OCI-LY7 (cell line): ENCODE measurements at regions of chr7 and their contacts with region 1.

Region 1: DNA sequence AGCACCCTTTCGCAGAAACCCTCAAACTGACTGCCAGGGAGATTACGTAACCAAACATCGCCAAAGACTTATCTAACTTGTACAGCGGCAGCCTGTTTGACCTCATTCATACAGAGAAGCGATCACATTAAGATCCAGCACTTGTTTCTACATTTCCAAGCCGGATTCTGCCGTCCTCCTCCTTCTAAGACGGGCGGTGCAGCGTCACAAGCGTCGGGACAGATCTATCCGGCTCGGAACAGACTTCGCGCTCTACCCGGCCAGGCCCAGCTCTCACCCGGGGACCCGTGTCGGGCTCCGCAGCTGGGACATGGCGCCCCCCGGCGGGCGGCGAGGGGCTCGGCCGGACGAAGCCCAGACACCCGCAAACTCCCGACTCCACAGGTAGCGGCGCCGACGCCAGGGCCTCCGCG is 373 bp downstream of the H2AZ2 start:
- DNase-seq: peak; percentile 90
- H3K4me3 ChIP-seq: peak overlapping the region; percentile 88
- H3K27ac ChIP-seq: peak overlapping the region; percentile 86
- H3K4me1 ChIP-seq: peaks cover 33% of the 10 kb centered on the region
- CTCF ChIP-seq: peak; percentile 85

Region 2: GRCh38 chr7:44587843-44588711 is 259.4 kb before region 1 on chr7:
- CTCF ChIA-PET with region 1: interaction called, 4 read pairs
- POLR2A ChIA-PET with region 1: interaction called, 4 read pairs
- intact Hi-C with region 1: loop called (anchors 1 kb)
- DNase-seq: peak; percentile 73
- H3K4me3 ChIP-seq: no peak overlapping the region
- H3K27ac ChIP-seq: no peak overlapping the region
- H3K4me1 ChIP-seq: peaks cover 9% of the 10 kb centered on the region
- CTCF ChIP-seq: peak; percentile 93

Region 3: GRCh38 chr7:44654255-44654796 is 193.2 kb before region 1 on chr7:
- CTCF ChIA-PET with region 1: no interaction called
- POLR2A ChIA-PET with region 1: no interaction called
- intact Hi-C with region 1: no loop called
- DNase-seq: no peak
- H3K4me3 ChIP-seq: no peak overlapping the region
- H3K27ac ChIP-seq: no peak overlapping the region
- H3K4me1 ChIP-seq: no peaks in the 10 kb centered on the region
- CTCF ChIP-seq: no peak

Region 4: GRCh38 chr7:44748045-44748947 is 99.2 kb before region 1 on chr7 and contains the start of gene ZMIZ2:
- CTCF ChIA-PET with region 1: no interaction called
- POLR2A ChIA-PET with region 1: interaction called, 5 read pairs
- intact Hi-C with region 1: loop called (anchors 1 kb)
- DNase-seq: peak; percentile 94
- H3K4me3 ChIP-seq: peak within 1 kb of the TSS; percentile 94
- H3K27ac ChIP-seq: peak within 1 kb of the TSS; percentile 66
- H3K4me1 ChIP-seq: peaks cover 38% of the 10 kb centered on the region
- CTCF ChIP-seq: no peak
- total RNA-seq, gene ZMIZ2: 17.2 and 18.0 TPM in 2 replicates

Region 5: DNA sequence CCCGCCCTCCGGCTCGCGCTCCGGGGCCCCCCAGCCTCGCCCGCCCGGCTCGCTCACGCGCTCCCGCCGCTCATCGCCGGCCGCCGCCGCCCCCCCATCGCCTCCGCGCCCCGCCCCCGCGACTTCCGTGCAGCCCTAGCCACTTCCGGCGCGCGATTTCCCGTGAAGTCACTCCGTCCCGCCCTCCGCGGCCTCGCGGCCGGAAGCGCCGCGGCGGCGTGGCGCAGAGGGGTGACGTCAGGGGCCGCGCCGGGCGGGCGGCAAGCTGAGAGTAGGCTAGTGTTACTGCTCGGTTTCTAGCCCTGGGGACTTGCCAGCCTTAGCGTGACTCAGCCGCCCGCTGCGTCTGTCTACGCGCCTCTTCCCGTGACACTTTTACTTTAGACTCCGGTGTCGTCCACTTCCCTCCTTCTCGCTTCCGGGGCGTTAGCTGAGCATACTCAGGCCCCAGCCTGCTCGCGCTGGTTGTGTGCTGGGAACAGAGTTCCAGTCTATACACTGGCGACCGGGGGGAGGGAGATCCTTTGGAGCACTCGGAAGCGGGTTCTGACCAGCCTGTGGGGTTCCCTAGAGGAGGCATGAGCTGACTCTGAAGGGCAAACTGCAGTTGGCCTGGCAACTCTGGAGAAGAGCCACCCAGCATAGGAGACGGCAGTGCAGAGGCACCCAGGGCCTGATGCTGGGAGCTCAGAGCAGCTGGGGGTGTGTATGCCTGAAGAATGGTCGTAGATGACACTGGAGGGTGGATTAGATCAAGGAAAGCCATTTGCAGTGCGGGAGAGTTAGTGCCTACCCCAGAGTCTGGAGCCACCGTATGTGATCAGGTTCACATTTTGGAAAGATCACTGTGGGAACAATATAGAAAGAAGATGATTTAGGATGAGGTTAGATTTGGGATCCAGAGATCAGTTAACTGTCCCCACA is 38.1 kb after region 1 on chr7 and contains the start of gene PURB:
- CTCF ChIA-PET with region 1: interaction called, 3 read pairs
- POLR2A ChIA-PET with region 1: interaction called, 27 read pairs
- intact Hi-C with region 1: loop called (anchors 1 kb)
- DNase-seq: peak; percentile 96
- H3K4me3 ChIP-seq: peak within 1 kb of the TSS; percentile 77
- H3K27ac ChIP-seq: peak within 1 kb of the TSS; percentile 91
- H3K4me1 ChIP-seq: peaks cover 63% of the 10 kb centered on the region
- CTCF ChIP-seq: no peak
- total RNA-seq, gene PURB: 14.9 and 15.2 TPM in 2 replicates

Region 6: DNA sequence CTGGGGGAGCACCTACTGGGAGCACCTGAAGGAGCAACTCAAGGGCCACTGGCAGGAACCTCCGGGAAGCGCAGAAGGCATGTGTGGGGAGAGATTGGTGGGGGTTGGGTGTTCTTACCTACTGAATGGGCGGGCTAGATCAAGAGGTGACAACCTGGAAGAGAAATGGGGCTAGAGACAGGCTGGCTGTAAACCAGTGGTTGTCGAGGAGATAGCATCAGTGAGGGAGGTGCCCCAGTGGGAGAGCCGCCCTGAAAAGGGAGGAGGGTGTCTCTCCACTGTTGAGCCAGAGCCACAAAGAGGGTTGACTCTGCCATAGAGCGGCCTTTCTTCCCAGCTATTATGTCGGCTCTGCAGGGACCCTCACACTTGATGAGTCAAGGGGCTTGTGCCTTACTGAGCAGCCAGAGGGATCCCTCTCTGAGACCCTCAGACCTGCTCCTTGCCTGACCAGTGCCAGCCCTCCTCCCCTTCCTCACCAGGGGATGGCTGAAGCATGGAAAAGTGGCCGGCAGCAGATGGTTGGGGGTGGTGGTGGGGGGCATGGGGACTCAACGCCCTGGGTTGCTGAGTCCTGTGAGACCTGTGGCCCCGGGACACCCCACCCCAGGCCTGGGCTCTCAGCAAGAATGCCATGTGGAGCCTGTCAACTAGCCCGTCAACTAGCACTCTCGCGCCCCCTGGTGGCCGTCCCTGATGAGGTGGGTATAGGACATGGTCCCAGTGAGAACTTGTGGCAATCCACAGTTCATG is 74.3 kb after region 1 on chr7:
- CTCF ChIA-PET with region 1: no interaction called
- POLR2A ChIA-PET with region 1: interaction called, 4 read pairs
- intact Hi-C with region 1: loop called (anchors 5 kb)
- DNase-seq: peak; percentile 86
- H3K4me3 ChIP-seq: no peak overlapping the region
- H3K27ac ChIP-seq: no peak overlapping the region
- H3K4me1 ChIP-seq: no peaks in the 10 kb centered on the region
- CTCF ChIP-seq: peak; percentile 95

Region 7: GRCh38 chr7:44999245-45000095 is 152.0 kb after region 1 on chr7:
- CTCF ChIA-PET with region 1: no interaction called
- POLR2A ChIA-PET with region 1: interaction called, 7 read pairs
- intact Hi-C with region 1: loop called (anchors 2 kb)
- DNase-seq: peak; percentile 100
- H3K4me3 ChIP-seq: peak overlapping the region; percentile 86
- H3K27ac ChIP-seq: peak overlapping the region; percentile 93
- H3K4me1 ChIP-seq: peaks cover 78% of the 10 kb centered on the region
- CTCF ChIP-seq: no peak